ENCODE measurements at regions of chr12 and their contacts with region 1.

Region 1: DNA sequence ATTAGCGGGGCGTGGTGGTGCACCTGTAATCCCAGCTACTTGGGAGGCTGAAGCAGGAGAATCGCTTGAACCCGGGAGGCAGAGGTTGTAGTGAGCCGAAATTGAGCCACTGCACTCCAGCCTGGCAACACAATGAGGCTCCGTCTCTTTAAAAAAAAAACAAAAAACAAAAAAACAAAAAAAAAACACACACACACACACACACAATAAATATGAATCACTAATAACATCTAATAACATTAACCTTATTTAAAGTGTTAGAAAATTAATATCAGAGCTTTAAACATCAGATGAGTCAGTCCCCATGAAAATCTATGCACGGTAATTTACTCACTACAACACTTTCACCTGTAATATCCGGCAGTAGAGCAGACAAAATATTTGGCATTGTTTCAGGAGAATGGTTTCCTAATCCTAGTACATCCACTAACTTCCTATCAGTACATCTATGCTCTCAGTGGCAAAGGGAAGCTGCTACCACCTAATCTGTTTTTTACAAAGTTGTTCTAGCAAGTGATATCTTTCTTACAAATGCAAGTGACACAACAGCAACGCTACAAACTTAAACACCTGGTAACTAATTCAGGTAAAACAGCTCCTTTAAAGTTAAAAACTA is 36.2 kb downstream of the MED13L start:
- DNase-seq: no peak
- H3K4me3 ChIP-seq: no peak overlapping the region
- H3K27ac ChIP-seq: no peak overlapping the region
- H3K27me3 ChIP-seq: no peaks in the 10 kb centered on the region
- CTCF ChIP-seq: no peak

Region 2: GRCh38 chr12:116222358-116222757 is 18.9 kb before region 1 on chr12:
- CTCF ChIA-PET with region 1: interaction called, 27 read pairs
- POLR2A ChIA-PET with region 1: no interaction called
- DNase-seq: peak; percentile 75
- H3K4me3 ChIP-seq: no peak overlapping the region
- H3K27ac ChIP-seq: no peak overlapping the region
- H3K27me3 ChIP-seq: no peaks in the 10 kb centered on the region
- CTCF ChIP-seq: no peak

Measured in AG04450 (cell line).